ENCODE measurements at regions of chr11 and their contacts with region 1.

Region 1: GRCh38 chr11:81979448-81979847 is 754.2 kb downstream of the FAM181B start:
- DNase-seq: no peak
- ATAC-seq: no peak
- H3K4me3 Mint-ChIP-seq: no peak overlapping the region
- H3K27ac Mint-ChIP-seq: no peak overlapping the region
- H3K4me1 Mint-ChIP-seq: no peaks in the 10 kb centered on the region
- H3K27me3 Mint-ChIP-seq: no peaks in the 10 kb centered on the region
- CTCF ChIP-seq: no peak

Region 2: GRCh38 chr11:82038153-82038552 is 58.7 kb after region 1 on chr11:
- CTCF ChIA-PET with region 1: no interaction called
- POLR2A ChIA-PET with region 1: no interaction called
- intact Hi-C with region 1: loop called (anchors 10 kb)
- DNase-seq: no peak
- ATAC-seq: no peak
- H3K4me3 Mint-ChIP-seq: no peak overlapping the region
- H3K27ac Mint-ChIP-seq: no peak overlapping the region
- H3K4me1 Mint-ChIP-seq: no peaks in the 10 kb centered on the region
- H3K27me3 Mint-ChIP-seq: peaks cover 1% of the 10 kb centered on the region
- CTCF ChIP-seq: no peak